ENCODE measurements at regions of chr2 and their contacts with region 1.

Region 1: DNA sequence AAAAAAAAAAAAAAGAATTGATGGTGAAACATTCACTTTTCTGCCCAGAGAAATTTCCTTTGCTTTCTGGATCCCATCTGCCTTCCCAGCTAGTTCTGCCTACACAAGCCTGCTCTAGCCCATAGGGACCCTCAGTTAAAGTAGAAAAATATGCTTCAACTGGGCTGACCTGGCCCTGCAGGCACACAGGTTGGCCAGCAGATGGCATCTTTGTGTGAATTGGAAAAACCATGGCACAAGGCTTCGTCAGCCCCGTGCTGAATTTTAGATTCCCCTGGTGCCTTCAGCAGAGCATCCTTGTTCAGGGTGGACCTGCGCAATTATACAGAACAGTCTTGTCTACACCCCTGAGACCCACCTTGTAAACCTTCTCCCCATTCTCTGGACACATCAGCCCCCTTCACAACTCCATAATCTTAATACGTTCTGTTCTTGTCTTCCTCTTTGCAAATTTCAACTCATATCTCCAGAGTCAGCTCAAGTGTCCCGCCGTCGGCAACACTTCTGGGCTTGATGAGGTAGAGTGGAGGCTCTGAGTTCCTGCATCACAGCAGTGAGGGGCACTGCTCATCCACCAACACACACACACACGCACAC is 114.5 kb downstream of the INSIG2 start:
- DNase-seq: peak; percentile 54
- H3K4me3 ChIP-seq: peak overlapping the region in 1 of 2 experiments; percentile 38; a peak in 1 of 4 replicates
- H3K27ac ChIP-seq: no peak overlapping the region
- H3K4me1 ChIP-seq: no peaks in the 10 kb centered on the region
- H3K27me3 ChIP-seq: peaks cover 16% of the 10 kb centered on the region; the same call in 1 of the 2 replicates
- CTCF ChIP-seq: peak; percentile 87
- EP300 ChIP-seq: no peak
- RAD21 ChIP-seq: peak; percentile 59

Region 2: GRCh38 chr2:118216224-118216623 is 13.4 kb after region 1 on chr2:
- CTCF ChIA-PET with region 1: interaction called, 12 read pairs
- POLR2A ChIA-PET with region 1: no interaction called
- DNase-seq: no peak
- H3K4me3 ChIP-seq: no peak overlapping the region
- H3K27ac ChIP-seq: no peak overlapping the region
- H3K4me1 ChIP-seq: no peaks in the 10 kb centered on the region
- H3K27me3 ChIP-seq: peaks cover 5% of the 10 kb centered on the region; the same call in 1 of the 2 replicates
- CTCF ChIP-seq: no peak
- EP300 ChIP-seq: no peak
- RAD21 ChIP-seq: no peak

Region 3: GRCh38 chr2:118291251-118291880 is 88.6 kb after region 1 on chr2:
- CTCF ChIA-PET with region 1: no interaction called
- POLR2A ChIA-PET with region 1: no interaction called
- DNase-seq: no peak
- H3K4me3 ChIP-seq: no peak overlapping the region
- H3K27ac ChIP-seq: no peak overlapping the region
- H3K4me1 ChIP-seq: no peaks in the 10 kb centered on the region
- H3K27me3 ChIP-seq: no peaks in the 10 kb centered on the region
- CTCF ChIP-seq: no peak
- EP300 ChIP-seq: no peak
- RAD21 ChIP-seq: no peak

Measured in SK-N-SH (cell line).